B cell (primary cell): ENCODE measurements at regions of chrX and their contacts with region 1.

Region 1: GRCh38 chrX:24464836-24465531 is at the start of gene PDK3:
- DNase-seq: peak; percentile 92
- ATAC-seq: peak; percentile 94
- H3K4me3 ChIP-seq: peak within 1 kb of the TSS; percentile 21 to 85 (median 67)
- H3K4me3 Mint-ChIP-seq: peak within 1 kb of the TSS; percentile 87
- H3K27ac ChIP-seq: peak within 1 kb of the TSS; percentile 78 to 80
- H3K27ac Mint-ChIP-seq: peak within 1 kb of the TSS; percentile 91
- H3K4me1 ChIP-seq: peaks cover 21 to 22% of the 10 kb centered on the region in 2 donors
- H3K4me1 Mint-ChIP-seq: peaks cover 47% of the 10 kb centered on the region
- H3K27me3 ChIP-seq: no peaks in the 10 kb centered on the region
- H3K27me3 Mint-ChIP-seq: no peaks in the 10 kb centered on the region
- CTCF ChIP-seq: no peak
- total RNA-seq, gene PDK3: 18.3 and 21.6 TPM in 2 replicates

Region 2: DNA sequence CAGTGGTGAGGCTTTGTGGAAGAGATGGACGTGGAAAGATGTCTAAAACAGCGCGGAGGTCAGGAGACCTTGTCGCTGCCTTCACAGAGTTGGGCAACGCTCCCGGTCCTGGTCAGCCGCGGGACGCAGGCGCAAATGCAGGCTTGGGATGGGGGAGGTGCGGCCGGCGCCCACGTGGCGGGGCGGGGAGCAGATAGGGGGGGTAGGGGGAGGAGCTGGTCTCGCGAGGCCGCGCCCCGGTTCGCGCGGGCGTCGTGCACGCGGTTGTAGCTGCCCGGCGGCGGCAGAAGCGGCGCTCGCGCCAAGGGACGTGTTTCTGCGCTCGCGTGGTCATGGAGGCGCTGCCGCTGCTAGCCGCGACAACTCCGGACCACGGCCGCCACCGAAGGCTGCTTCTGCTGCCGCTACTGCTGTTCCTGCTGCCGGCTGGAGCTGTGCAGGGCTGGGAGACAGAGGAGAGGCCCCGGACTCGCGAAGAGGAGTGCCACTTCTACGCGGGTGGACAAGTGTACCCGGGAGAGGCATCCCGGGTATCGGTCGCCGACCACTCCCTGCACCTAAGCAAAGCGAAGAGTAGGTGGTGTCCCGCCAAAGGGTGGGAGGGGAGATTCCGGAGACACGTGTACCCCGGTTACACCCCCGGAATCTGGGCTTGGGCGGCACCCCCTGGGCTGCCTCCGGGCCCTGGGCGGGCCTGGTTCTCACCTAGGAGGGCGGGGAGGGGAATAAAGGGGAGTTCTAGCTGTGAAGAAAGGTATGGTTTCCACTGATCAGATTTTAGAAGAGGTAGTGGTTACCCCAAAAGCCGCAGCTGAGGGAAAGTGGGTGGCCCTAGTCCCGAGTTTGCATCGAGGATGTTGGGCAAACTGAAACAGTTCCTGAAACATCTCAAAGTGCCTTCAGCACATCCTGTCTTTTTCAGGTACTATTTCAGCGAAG is 797.5 kb before region 1 on chrX and contains the start of gene PRDX4:
- CTCF ChIA-PET with region 1: no interaction called
- POLR2A ChIA-PET with region 1: no interaction called
- intact Hi-C with region 1: loop called (anchors 10 kb)
- DNase-seq: peak; percentile 83
- ATAC-seq: peak; percentile 91
- H3K4me3 ChIP-seq: peak within 1 kb of the TSS; percentile 21 to 66 (median 64)
- H3K4me3 Mint-ChIP-seq: peak within 1 kb of the TSS; percentile 91
- H3K27ac ChIP-seq: peak within 1 kb of the TSS; percentile 77 to 82
- H3K27ac Mint-ChIP-seq: peak within 1 kb of the TSS; percentile 94
- H3K4me1 ChIP-seq: peaks cover 7 to 15% of the 10 kb centered on the region in 2 donors
- H3K4me1 Mint-ChIP-seq: peaks cover 20% of the 10 kb centered on the region
- H3K27me3 ChIP-seq: no peaks in the 10 kb centered on the region
- H3K27me3 Mint-ChIP-seq: no peaks in the 10 kb centered on the region
- CTCF ChIP-seq: no peak
- total RNA-seq, gene PRDX4: 10.6 and 12.8 TPM in 2 replicates

Region 3: GRCh38 chrX:24024819-24025740 is 439.9 kb before region 1 on chrX:
- CTCF ChIA-PET with region 1: no interaction called
- POLR2A ChIA-PET with region 1: no interaction called
- intact Hi-C with region 1: loop called (anchors 5 kb)
- DNase-seq: peak; percentile 88
- ATAC-seq: peak; percentile 89
- H3K4me3 ChIP-seq: peak overlapping the region; percentile 54 to 81 (median 79)
- H3K4me3 Mint-ChIP-seq: peak overlapping the region; percentile 85
- H3K27ac ChIP-seq: peak overlapping the region; percentile 77 to 93
- H3K27ac Mint-ChIP-seq: peak overlapping the region; percentile 82
- H3K4me1 ChIP-seq: peaks cover 4 to 10% of the 10 kb centered on the region in 2 donors
- H3K4me1 Mint-ChIP-seq: peaks cover 36% of the 10 kb centered on the region
- H3K27me3 ChIP-seq: no peaks in the 10 kb centered on the region
- H3K27me3 Mint-ChIP-seq: no peaks in the 10 kb centered on the region
- CTCF ChIP-seq: no peak

Region 4: DNA sequence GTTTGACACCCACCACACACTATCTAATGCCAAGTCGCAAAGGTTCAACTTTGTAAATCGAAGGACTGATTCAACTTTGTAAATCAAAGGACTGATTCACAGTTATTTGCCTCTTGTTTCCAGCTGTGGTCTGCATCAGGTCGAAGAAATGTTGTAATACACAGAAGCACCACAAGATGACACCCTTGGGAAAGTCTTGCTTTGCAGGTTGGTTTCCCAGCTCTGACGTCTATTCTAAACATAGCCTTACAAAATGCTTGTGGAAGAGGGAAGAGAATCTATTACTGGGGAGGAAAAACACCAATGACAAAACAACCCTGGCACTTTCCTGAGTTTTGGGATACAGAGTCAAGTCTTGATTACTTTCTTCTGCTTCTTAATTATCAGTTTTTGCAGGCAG is 69.2 kb before region 1 on chrX:
- CTCF ChIA-PET with region 1: interaction called, 8 read pairs
- POLR2A ChIA-PET with region 1: no interaction called
- intact Hi-C with region 1: loop called (anchors 1 kb)
- DNase-seq: peak; percentile 74
- ATAC-seq: peak; percentile 63
- H3K4me3 ChIP-seq: no peak overlapping the region
- H3K4me3 Mint-ChIP-seq: no peak overlapping the region
- H3K27ac ChIP-seq: no peak overlapping the region
- H3K27ac Mint-ChIP-seq: no peak overlapping the region
- H3K4me1 ChIP-seq: no peaks in the 10 kb centered on the region
- H3K4me1 Mint-ChIP-seq: peaks cover 2% of the 10 kb centered on the region
- H3K27me3 ChIP-seq: peaks cover 0 to 4% (median 1%) of the 10 kb centered on the region in 4 experiments
- H3K27me3 Mint-ChIP-seq: peaks cover 10% of the 10 kb centered on the region
- CTCF ChIP-seq: peak; percentile 76

Region 5: DNA sequence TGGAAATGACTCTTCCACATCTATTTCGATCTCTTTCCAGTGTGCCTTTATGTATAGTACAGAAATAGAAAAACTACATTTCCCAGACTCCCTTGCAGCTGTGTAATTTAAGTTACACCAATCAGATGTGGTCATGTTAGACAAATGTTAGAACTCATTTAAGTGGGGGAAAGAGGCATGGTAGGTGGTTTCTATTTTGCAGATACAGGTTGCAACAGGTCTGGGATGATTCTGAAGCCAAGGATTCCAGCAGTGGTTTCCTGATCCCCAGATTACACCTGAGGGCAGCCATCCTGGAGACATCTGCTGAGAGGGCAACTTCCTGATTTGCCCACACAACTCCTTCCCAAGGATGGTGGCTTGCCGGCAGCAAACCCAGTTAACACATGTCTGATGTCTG is 38.6 kb before region 1 on chrX:
- CTCF ChIA-PET with region 1: no interaction called
- POLR2A ChIA-PET with region 1: no interaction called
- intact Hi-C with region 1: loop called (anchors 1 kb)
- DNase-seq: peak; percentile 23
- ATAC-seq: no peak
- H3K4me3 ChIP-seq: peak overlapping the region in 1 of 5 experiments; percentile 9
- H3K4me3 Mint-ChIP-seq: no peak overlapping the region
- H3K27ac ChIP-seq: no peak overlapping the region
- H3K27ac Mint-ChIP-seq: no peak overlapping the region
- H3K4me1 ChIP-seq: peaks cover 0 to 5% of the 10 kb centered on the region in 2 donors
- H3K4me1 Mint-ChIP-seq: peaks cover 4% of the 10 kb centered on the region
- H3K27me3 ChIP-seq: no peaks in the 10 kb centered on the region
- H3K27me3 Mint-ChIP-seq: no peaks in the 10 kb centered on the region
- CTCF ChIP-seq: no peak

Region 6: DNA sequence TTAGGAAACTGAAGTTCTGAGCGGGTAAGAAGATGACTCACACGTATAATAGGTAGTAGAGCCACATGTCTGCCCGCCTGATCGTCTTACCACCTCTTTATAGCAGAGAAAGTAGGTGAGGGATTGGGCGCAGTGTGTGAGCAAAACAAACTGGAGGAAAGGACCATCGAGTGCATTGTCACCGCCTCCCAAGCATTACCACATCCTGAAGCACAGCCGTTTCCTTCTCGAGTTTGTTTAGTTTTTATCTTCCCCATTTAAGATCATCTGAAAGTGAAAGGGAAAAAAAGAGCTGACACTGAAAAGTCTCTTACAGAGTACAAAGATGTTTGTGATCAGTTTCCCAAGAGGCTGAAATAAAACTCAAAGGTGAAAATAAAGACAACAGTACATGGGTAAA is 14.9 kb after region 1 on chrX:
- CTCF ChIA-PET with region 1: interaction called, 3 read pairs
- POLR2A ChIA-PET with region 1: interaction called, 12 read pairs
- intact Hi-C with region 1: loop called (anchors 1 kb)
- DNase-seq: peak; percentile 89
- ATAC-seq: peak; percentile 96
- H3K4me3 ChIP-seq: peak overlapping the region; percentile 31 to 62 (median 42)
- H3K4me3 Mint-ChIP-seq: peak overlapping the region; percentile 92
- H3K27ac ChIP-seq: peak overlapping the region; percentile 93 to 96
- H3K27ac Mint-ChIP-seq: peak overlapping the region; percentile 99
- H3K4me1 ChIP-seq: peaks cover 33 to 49% of the 10 kb centered on the region in 2 donors
- H3K4me1 Mint-ChIP-seq: peaks cover 62% of the 10 kb centered on the region
- H3K27me3 ChIP-seq: no peaks in the 10 kb centered on the region
- H3K27me3 Mint-ChIP-seq: no peaks in the 10 kb centered on the region
- CTCF ChIP-seq: no peak

Region 7: DNA sequence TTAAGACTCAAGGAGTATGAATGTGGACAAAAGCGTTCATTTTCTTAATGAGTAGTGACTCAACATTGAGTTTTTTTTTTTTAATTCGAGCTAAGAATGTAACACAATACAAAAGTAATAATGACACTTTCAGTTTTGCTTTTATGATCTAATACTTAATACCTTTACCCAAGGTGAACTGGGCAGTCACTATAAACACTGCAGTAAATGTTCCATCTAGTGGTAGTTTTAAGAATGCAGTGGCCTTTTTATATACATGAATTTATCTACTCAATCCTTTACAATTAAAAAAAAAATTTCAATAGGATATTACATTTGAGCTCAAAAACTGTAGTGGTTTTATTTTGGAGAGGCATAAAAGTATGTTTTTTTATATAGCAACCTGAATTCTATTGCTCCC is 34.0 kb after region 1 on chrX:
- CTCF ChIA-PET with region 1: interaction called, 15 read pairs
- POLR2A ChIA-PET with region 1: interaction called, 4 read pairs
- intact Hi-C with region 1: loop called (anchors 2 kb)
- DNase-seq: peak; percentile 56
- ATAC-seq: peak; percentile 56
- H3K4me3 ChIP-seq: no peak overlapping the region
- H3K4me3 Mint-ChIP-seq: no peak overlapping the region
- H3K27ac ChIP-seq: peak overlapping the region in 1 of 2 donors; percentile 37
- H3K27ac Mint-ChIP-seq: no peak overlapping the region
- H3K4me1 ChIP-seq: peaks cover 3 to 6% of the 10 kb centered on the region in 2 donors
- H3K4me1 Mint-ChIP-seq: peaks cover 18% of the 10 kb centered on the region
- H3K27me3 ChIP-seq: no peaks in the 10 kb centered on the region
- H3K27me3 Mint-ChIP-seq: no peaks in the 10 kb centered on the region
- CTCF ChIP-seq: peak; percentile 66